ENCODE measurements at regions of chr2 and their contacts with region 1.

Region 1: GRCh38 chr2:191773136-191773535 is 73.8 kb downstream of the CAVIN2 start:
- DNase-seq: no peak
- H3K4me3 ChIP-seq: no peak overlapping the region
- CTCF ChIP-seq: no peak

Region 2: GRCh38 chr2:191758518-191759507 is 14.3 kb before region 1 on chr2:
- CTCF ChIA-PET with region 1: interaction called, 12 read pairs
- POLR2A ChIA-PET with region 1: no interaction called
- DNase-seq: no peak
- H3K4me3 ChIP-seq: no peak overlapping the region
- CTCF ChIP-seq: peak; percentile 67

Region 3: GRCh38 chr2:191917967-191918651 is 145.0 kb after region 1 on chr2:
- CTCF ChIA-PET with region 1: no interaction called
- POLR2A ChIA-PET with region 1: no interaction called
- DNase-seq: no peak
- H3K4me3 ChIP-seq: no peak overlapping the region
- CTCF ChIP-seq: no peak

Region 4: DNA sequence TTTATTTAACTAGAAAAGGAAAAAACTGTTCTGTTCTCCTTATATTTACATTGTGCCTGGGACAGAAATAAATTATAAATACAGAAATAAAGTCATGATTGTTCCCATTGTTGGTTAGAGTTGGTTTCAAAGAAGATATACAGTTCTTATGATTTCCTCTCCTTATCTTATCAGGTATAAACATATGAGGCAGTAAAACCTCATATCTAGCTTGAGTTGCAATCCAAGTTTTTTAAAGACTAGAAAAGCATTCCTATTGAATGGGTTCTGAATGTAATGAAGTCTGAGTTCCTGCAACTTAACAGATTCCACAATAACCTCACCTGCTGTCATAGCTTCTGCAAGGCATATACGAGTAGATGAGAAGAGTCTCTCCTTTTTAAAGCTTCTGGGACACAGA is 188.4 kb after region 1 on chr2:
- CTCF ChIA-PET with region 1: no interaction called
- POLR2A ChIA-PET with region 1: no interaction called
- DNase-seq: no peak
- H3K4me3 ChIP-seq: no peak overlapping the region
- CTCF ChIP-seq: no peak